Pancreas (tissue), 10 donors: ENCODE measurements at regions of chr2 and their contacts with region 1.

Region 1: DNA sequence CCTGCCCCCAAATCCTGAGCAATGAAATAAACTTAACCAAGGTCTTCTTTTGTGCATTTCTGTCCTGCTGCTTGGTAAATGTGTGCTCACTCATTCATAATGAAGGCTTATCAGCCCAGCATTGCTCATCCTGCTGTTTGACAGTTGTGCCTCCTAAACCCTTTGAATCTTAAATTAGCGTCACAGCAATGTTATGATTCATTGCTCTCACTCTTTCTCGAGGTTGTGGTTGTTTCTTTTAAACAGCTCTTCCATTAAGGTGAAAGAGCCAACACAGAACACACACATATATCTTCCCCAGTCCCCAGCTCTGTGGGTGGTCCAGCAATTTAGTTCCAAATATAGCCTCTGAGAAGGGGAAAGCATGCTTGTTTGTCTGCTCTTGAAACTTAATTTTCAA is 84.0 kb downstream of the EVA1A start:
- DNase-seq: no peak
- ATAC-seq: peak in 2 of 4 donors; percentile 8 to 24
- H3K4me3 ChIP-seq: no peak overlapping the region
- H3K27ac ChIP-seq: no peak overlapping the region
- H3K4me1 ChIP-seq: peaks cover 3 to 12% (median 5%) of the 10 kb centered on the region in 3 donors
- H3K27me3 ChIP-seq: no peaks in the 10 kb centered on the region
- CTCF ChIP-seq: no peak

Region 2: DNA sequence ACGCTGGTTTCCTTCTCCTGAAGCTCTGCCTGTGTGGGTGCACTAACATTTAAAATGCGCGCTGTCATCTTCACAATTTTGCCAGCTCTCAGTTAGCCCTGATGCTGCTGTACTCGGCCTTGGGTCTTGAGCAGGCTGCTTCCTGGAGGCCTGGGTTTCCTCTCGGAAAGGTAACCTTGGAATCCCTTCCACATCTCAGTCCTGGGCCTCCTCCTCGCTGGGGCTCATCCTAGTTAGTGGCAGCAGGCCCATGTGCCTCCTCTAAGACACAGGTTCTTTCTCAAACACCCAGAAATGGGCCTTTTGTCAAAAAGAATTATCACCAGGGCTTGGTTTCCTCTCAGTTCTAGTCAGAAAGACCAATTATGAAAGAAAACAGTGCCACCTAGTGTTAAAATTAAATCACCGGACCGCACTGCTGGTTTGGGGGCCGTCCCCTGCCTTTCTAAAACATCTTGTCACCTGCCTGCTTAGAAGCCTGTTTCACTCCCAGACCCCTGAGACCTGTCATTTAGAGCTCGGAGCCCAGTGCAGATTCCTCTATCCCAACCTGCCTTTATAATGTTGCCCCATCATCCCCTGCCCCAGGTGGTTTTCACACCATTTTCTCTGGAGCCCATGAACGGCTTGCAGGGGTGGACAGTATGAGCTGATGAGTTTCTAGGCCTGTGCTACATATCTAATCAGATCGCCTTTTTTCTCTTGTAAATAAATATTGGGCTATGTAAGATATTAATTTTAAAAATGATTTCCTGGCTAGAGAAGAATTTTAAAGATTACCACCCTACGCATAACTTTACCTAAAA is 600.5 kb before region 1 on chr2:
- intact Hi-C with region 1: no loop called
- DNase-seq: peak in 1 of 6 donors; percentile 41
- ATAC-seq: peak; percentile 79 to 91 (median 84)
- H3K4me3 ChIP-seq: no peak overlapping the region
- H3K27ac ChIP-seq: no peak overlapping the region
- H3K4me1 ChIP-seq: no peaks in the 10 kb centered on the region
- H3K27me3 ChIP-seq: no peaks in the 10 kb centered on the region
- CTCF ChIP-seq: peak; percentile 36 to 77 (median 66)

Region 3: GRCh38 chr2:75614056-75614710 is 137.4 kb after region 1 on chr2:
- intact Hi-C with region 1: loop called (anchors 5 to 10 kb)
- DNase-seq: no peak
- ATAC-seq: peak in 3 of 4 donors; percentile 19 to 76 (median 41)
- H3K4me3 ChIP-seq: no peak overlapping the region
- H3K27ac ChIP-seq: no peak overlapping the region
- H3K4me1 ChIP-seq: no peaks in the 10 kb centered on the region
- H3K27me3 ChIP-seq: no peaks in the 10 kb centered on the region
- CTCF ChIP-seq: no peak

Region 4: DNA sequence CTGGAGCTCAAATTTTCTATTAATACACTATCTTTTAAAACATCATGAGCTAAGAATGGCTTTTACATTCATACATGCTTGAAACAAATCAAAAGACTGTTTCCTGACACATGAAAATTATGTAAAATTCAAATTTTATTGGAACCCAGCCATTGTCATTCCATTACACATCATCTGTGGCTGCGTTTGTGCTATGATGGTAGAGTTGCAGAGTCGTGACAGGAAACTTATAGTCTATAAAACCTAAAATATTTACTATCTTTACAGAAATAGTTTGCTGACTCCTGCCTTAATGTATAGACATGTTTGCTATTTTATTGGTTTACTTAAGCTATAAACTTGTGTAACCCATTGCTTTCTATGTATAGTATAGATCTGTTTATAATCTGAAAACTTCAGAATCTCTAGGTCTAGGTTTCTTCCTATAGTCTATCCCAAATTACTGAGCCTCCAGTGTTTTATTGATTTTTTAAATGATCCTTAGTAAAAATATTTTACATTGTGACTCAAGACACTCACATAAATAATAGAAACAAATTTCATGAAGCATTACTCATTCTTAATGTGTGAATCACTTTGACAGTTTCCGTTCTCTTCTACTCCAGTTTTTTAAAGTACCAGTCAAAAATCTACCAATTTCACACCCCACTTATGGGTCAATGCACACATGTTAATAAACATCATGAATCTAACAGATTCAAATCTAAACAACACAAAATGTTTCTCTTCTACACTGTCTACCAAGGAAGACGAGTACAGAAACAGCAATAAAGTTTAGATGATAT is 143.4 kb after region 1 on chr2:
- intact Hi-C with region 1: loop called in 1 of 3 experiments (anchors 10 kb)
- DNase-seq: no peak
- ATAC-seq: no peak
- H3K4me3 ChIP-seq: no peak overlapping the region
- H3K27ac ChIP-seq: no peak overlapping the region
- H3K4me1 ChIP-seq: no peaks in the 10 kb centered on the region
- H3K27me3 ChIP-seq: no peaks in the 10 kb centered on the region
- CTCF ChIP-seq: no peak